Right cardiac atrium (tissue), 5 donors: ENCODE measurements at regions of chr20 and their contacts with region 1.

Region 1: GRCh38 chr20:51298141-51298749 is 244.3 kb downstream of the NFATC2 start:
- DNase-seq: no peak
- ATAC-seq: no peak
- H3K4me3 ChIP-seq: no peak overlapping the region
- H3K27ac ChIP-seq: no peak overlapping the region
- H3K4me1 ChIP-seq: no peaks in the 10 kb centered on the region
- H3K27me3 ChIP-seq: no peaks in the 10 kb centered on the region

Region 2: GRCh38 chr20:50996901-50997865 is 301.1 kb before region 1 on chr20:
- intact Hi-C with region 1: loop called in 1 of 4 experiments (anchors 5 kb)
- DNase-seq: no peak
- ATAC-seq: no peak
- H3K4me3 ChIP-seq: no peak overlapping the region
- H3K27ac ChIP-seq: no peak overlapping the region
- H3K4me1 ChIP-seq: no peaks in the 10 kb centered on the region
- H3K27me3 ChIP-seq: no peaks in the 10 kb centered on the region

Region 3: GRCh38 chr20:51237278-51237677 is 61.0 kb before region 1 on chr20:
- intact Hi-C with region 1: no loop called
- DNase-seq: peak in 2 of 3 donors; percentile 56 to 68
- ATAC-seq: peak; percentile 87 to 88
- H3K4me3 ChIP-seq: no peak overlapping the region
- H3K27ac ChIP-seq: no peak overlapping the region
- H3K4me1 ChIP-seq: no peaks in the 10 kb centered on the region
- H3K27me3 ChIP-seq: no peaks in the 10 kb centered on the region